ENCODE measurements at regions of chr11 and their contacts with region 1.

Region 1: DNA sequence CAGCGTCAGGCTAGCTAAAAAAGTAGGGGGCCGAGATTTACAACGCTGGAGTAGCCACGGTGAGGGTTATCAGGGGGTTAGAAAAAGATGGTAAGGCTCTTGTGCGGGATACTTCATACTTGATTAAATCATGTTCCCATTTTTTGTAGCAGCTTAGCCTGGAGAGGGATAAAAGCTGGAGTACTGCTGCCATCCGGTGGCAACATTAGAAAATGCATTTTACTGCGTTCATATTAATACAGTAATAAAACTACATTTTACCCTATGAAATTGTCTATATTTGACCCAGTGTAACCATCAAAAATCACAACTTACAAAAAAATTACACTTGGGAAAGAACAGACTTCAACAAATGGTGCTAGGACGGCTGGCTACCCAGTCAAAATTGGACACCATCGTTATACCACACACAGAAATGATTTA is 17.3 kb downstream of the RPUSD4 start:
- DNase-seq: no peak
- ATAC-seq: peak; percentile 82
- H3K4me3 ChIP-seq: no peak overlapping the region
- H3K27ac ChIP-seq: no peak overlapping the region
- H3K4me1 ChIP-seq: no peaks in the 10 kb centered on the region
- H3K27me3 ChIP-seq: no peaks in the 10 kb centered on the region
- CTCF ChIP-seq: peak; percentile 53 to 74 (median 73); a peak in 4 of 6 replicates
- POLR2A ChIP-seq: no peak
- RAD21 ChIP-seq: peak; percentile 94

Region 2: DNA sequence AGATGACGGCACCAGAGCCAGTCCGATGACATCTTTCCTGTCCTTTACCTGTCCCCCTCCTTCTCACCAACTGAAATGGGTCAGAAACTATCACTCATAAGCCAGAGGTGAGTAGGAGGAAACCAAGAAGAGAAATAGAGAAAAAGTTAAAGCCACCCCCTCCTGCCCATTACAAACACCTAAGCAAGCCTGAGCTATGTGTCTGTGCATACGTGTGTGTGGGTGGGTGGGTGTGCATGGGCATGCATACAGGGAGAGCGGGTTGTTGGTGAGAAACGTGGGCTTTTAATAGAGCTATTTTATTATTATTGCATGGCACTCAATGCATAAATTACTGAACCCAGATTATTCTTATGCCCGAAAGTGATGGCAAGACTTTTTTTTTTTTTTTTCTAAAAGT is 358.4 kb before region 1 on chr11:
- CTCF ChIA-PET with region 1: no interaction called
- POLR2A ChIA-PET with region 1: no interaction called
- RAD21 ChIA-PET with region 1: no interaction called
- intact Hi-C with region 1: no loop called
- DNase-seq: no peak
- ATAC-seq: no peak
- H3K4me3 ChIP-seq: no peak overlapping the region
- H3K27ac ChIP-seq: no peak overlapping the region
- H3K4me1 ChIP-seq: no peaks in the 10 kb centered on the region
- H3K27me3 ChIP-seq: peaks cover 59% of the 10 kb centered on the region
- CTCF ChIP-seq: no peak
- POLR2A ChIP-seq: no peak
- RAD21 ChIP-seq: no peak

Region 3: DNA sequence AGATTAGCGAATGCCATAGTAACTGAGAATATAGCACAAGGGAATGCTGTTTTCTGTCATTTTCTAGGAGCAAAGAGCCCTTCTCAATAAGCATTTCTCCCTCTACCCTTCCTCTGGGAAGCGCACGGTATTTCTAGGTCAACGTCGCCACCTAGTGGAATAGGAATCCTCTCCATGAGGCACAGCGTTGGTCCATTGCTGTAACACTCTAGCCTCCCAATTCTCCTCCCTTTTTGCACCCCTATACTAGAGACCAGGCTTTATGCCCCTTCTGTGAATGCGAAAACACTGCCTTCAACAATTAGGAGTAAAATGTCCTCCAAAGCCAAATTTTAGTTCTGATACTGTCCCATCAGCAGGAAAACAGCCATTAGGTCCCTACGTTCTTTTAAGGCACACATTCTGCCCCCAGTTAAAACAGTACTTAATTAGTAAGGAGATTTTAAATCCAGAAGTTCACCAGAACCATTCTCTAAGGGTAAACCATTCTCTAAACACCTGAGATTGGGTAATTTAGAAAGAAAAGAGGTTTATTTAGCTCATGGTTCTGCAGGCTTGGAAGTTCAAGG is 319.5 kb before region 1 on chr11:
- CTCF ChIA-PET with region 1: no interaction called
- POLR2A ChIA-PET with region 1: no interaction called
- RAD21 ChIA-PET with region 1: no interaction called
- intact Hi-C with region 1: no loop called
- DNase-seq: peak; percentile 44
- ATAC-seq: peak; percentile 96
- H3K4me3 ChIP-seq: no peak overlapping the region
- H3K27ac ChIP-seq: no peak overlapping the region
- H3K4me1 ChIP-seq: no peaks in the 10 kb centered on the region
- H3K27me3 ChIP-seq: no peaks in the 10 kb centered on the region
- CTCF ChIP-seq: peak; percentile 71 to 85 (median 80)
- POLR2A ChIP-seq: no peak
- RAD21 ChIP-seq: peak; percentile 90

Region 4: GRCh38 chr11:125923012-125923579 is 271.0 kb before region 1 on chr11:
- CTCF ChIA-PET with region 1: interaction called, 8 read pairs
- POLR2A ChIA-PET with region 1: no interaction called
- RAD21 ChIA-PET with region 1: no interaction called
- intact Hi-C with region 1: loop called (anchors 1 kb)
- DNase-seq: peak; percentile 77
- ATAC-seq: peak; percentile 98
- H3K4me3 ChIP-seq: no peak overlapping the region
- H3K27ac ChIP-seq: no peak overlapping the region
- H3K4me1 ChIP-seq: no peaks in the 10 kb centered on the region
- H3K27me3 ChIP-seq: no peaks in the 10 kb centered on the region
- CTCF ChIP-seq: peak; percentile 75 to 86 (median 86)
- POLR2A ChIP-seq: no peak
- RAD21 ChIP-seq: peak; percentile 95

Region 5: DNA sequence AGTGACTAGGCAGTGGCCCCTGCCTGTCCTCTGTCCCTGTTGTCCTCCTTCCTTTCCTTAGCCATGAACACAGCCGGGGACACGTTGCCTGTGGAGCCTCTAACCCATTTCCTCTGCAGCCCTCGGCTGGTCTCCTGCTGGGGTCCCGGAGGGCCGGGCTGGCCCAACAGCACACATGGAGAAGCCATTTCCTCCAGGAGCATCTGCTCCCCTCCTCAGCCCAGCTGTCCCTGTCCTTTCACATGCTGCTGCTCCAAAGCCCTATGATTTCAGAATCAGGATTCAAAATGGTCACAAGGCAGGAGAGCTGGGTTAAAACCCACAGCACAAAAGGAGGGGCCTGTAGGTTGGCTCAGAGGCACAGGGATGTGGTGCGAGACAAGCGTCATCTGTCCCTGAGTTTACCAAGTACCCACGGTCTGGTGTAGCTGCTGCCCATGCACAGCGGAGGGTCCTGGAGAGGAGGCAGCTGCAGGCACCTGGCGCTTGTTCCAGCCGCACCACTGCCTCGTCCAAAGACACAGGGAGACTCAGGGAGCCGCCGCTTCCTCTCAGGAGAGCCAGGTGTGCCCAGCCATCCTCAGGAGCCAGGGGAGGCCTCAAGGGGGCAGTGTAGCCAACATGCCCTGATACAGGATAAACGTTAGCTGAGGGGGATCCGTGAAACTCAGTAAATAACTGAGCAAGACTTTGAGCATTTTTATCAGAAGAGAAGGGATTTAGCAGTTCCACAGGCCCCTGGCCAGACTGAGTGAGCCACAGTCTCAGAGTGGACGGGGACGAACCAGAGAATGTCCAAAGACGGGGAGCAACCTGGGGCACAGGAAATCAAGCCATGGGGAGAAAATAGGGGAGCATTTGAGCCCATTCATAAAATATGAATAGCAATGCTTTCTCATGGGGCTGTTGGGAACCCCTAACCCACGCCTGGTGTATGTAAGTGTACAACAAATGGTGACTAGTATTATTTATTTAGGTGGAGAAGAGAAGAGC is 252.2 kb before region 1 on chr11:
- CTCF ChIA-PET with region 1: interaction called, 19 read pairs
- POLR2A ChIA-PET with region 1: no interaction called
- RAD21 ChIA-PET with region 1: interaction called in 1 of 2 experiments, 6 read pairs
- intact Hi-C with region 1: loop called (anchors 1 kb)
- DNase-seq: peak; percentile 22
- ATAC-seq: peak; percentile 97
- H3K4me3 ChIP-seq: no peak overlapping the region
- H3K27ac ChIP-seq: no peak overlapping the region
- H3K4me1 ChIP-seq: peaks cover 7 to 22% of the 10 kb centered on the region in 2 experiments
- H3K27me3 ChIP-seq: no peaks in the 10 kb centered on the region
- CTCF ChIP-seq: peak; percentile 64 to 96 (median 87)
- POLR2A ChIP-seq: no peak
- RAD21 ChIP-seq: peak; percentile 70

Region 6: GRCh38 chr11:126062679-126063506 is 131.2 kb before region 1 on chr11 and contains the start of gene CDON:
- CTCF ChIA-PET with region 1: no interaction called
- POLR2A ChIA-PET with region 1: no interaction called
- RAD21 ChIA-PET with region 1: no interaction called
- intact Hi-C with region 1: loop called (anchors 2 kb)
- DNase-seq: peak; percentile 87
- ATAC-seq: peak; percentile 97
- H3K4me3 ChIP-seq: peak within 1 kb of the TSS; percentile 46 to 57
- H3K27ac ChIP-seq: peak within 1 kb of the TSS; percentile 79
- H3K4me1 ChIP-seq: peaks cover 11 to 16% of the 10 kb centered on the region in 2 experiments
- H3K27me3 ChIP-seq: peaks cover 5% of the 10 kb centered on the region; the same call in 1 of the 2 replicates
- CTCF ChIP-seq: no peak
- POLR2A ChIP-seq: no peak
- RAD21 ChIP-seq: no peak
- total RNA-seq, gene CDON: 16.9 TPM